Left ventricle myocardium superior (tissue), 1 donor: ENCODE measurements at regions of chr6 and their contacts with region 1.

Region 1: GRCh38 chr6:11064836-11065235 is 20.7 kb upstream of the ELOVL2 start:
- DNase-seq: no peak
- ATAC-seq: no peak

Region 2: GRCh38 chr6:10478187-10479040 is 586.4 kb before region 1 on chr6:
- intact Hi-C with region 1: loop called (anchors 10 kb)
- DNase-seq: no peak
- ATAC-seq: no peak

Region 3: GRCh38 chr6:10542213-10542612 is 522.6 kb before region 1 on chr6:
- intact Hi-C with region 1: no loop called
- DNase-seq: no peak
- ATAC-seq: no peak

Region 4: GRCh38 chr6:10954590-10955010 is 110.2 kb before region 1 on chr6:
- intact Hi-C with region 1: loop called (anchors 5 kb)
- DNase-seq: peak; percentile 82
- ATAC-seq: peak; percentile 75